ENCODE measurements at regions of chr2 and their contacts with region 1.

Region 1: GRCh38 chr2:134218930-134219658 is 34.8 kb upstream of the MGAT5 start:
- DNase-seq: peak; percentile 66
- H3K4me3 Mint-ChIP-seq: peak overlapping the region; percentile 33
- H3K27ac Mint-ChIP-seq: peak overlapping the region; percentile 91
- H3K4me1 Mint-ChIP-seq: peaks cover 60% of the 10 kb centered on the region
- H3K27me3 Mint-ChIP-seq: no peaks in the 10 kb centered on the region

Region 2: GRCh38 chr2:134169788-134170187 is 49.3 kb before region 1 on chr2:
- CTCF ChIA-PET with region 1: interaction called, 3 read pairs
- intact Hi-C with region 1: loop called (anchors 1 kb)
- DNase-seq: peak; percentile 45
- H3K4me3 Mint-ChIP-seq: no peak overlapping the region
- H3K27ac Mint-ChIP-seq: no peak overlapping the region
- H3K4me1 Mint-ChIP-seq: peaks cover 68% of the 10 kb centered on the region
- H3K27me3 Mint-ChIP-seq: no peaks in the 10 kb centered on the region

Region 3: GRCh38 chr2:134207564-134208209 is 11.4 kb before region 1 on chr2:
- CTCF ChIA-PET with region 1: interaction called, 11 read pairs
- intact Hi-C with region 1: no loop called
- DNase-seq: peak; percentile 81
- H3K4me3 Mint-ChIP-seq: no peak overlapping the region
- H3K27ac Mint-ChIP-seq: no peak overlapping the region
- H3K4me1 Mint-ChIP-seq: peaks cover 5% of the 10 kb centered on the region
- H3K27me3 Mint-ChIP-seq: no peaks in the 10 kb centered on the region

Region 4: DNA sequence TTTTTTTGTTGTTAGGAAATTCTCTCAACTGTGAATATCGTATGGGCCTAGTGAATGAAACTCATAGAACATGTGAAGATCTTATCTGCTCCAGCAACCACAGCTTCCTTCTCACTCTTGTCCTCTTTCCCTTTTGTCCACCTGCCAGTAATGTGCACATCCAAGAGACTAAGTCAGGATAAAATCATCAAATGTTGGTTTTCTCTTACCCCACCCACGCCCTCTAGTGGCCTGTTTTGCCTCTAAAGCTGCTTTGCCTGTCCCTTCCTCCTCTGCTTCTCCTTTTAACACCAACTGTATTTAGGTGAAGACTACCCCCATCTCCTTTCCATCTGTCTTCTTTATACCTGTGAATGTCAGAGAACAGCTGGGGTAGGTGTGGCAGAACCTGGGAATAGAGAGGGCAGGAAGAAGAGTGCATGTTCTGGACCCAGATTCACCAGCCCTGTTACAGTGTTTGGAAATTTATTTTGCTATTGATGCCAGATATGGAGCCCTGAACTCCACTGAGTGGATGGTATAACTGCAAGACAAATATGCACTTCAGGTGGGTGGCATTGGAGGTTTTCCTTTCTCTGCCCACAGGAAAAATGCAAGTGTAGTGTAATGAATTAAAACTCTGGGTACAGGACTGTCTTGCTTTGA is 26.4 kb after region 1 on chr2:
- CTCF ChIA-PET with region 1: interaction called, 13 read pairs
- intact Hi-C with region 1: no loop called
- DNase-seq: peak; percentile 90
- H3K4me3 Mint-ChIP-seq: no peak overlapping the region
- H3K27ac Mint-ChIP-seq: no peak overlapping the region
- H3K4me1 Mint-ChIP-seq: peaks cover 68% of the 10 kb centered on the region
- H3K27me3 Mint-ChIP-seq: no peaks in the 10 kb centered on the region

Region 5: DNA sequence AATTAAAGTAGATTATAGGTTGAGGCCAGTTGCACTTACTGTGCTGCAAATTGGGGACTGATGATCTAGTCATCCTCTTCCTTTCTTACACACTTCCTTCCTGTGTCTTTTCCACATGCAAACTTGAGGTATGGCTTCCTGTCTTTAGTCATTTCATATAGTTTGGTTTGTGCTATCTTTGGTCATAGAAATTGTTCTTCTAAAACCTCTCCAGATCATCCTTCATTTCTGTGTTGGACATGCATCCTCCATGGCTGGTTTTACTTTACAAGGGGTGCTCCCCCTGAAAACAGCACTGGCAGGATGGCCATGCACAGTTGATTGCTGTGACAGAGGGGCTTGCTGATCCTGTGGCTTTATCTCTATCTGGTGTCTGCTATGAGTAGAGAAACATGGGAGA is 71.3 kb after region 1 on chr2:
- CTCF ChIA-PET with region 1: no interaction called
- intact Hi-C with region 1: loop called (anchors 1 kb)
- DNase-seq: peak; percentile 30
- H3K4me3 Mint-ChIP-seq: no peak overlapping the region
- H3K27ac Mint-ChIP-seq: no peak overlapping the region
- H3K4me1 Mint-ChIP-seq: peaks cover 24% of the 10 kb centered on the region
- H3K27me3 Mint-ChIP-seq: no peaks in the 10 kb centered on the region

Region 6: GRCh38 chr2:134411828-134412638 is 192.9 kb after region 1 on chr2:
- CTCF ChIA-PET with region 1: interaction called, 5 read pairs
- intact Hi-C with region 1: loop called (anchors 1 kb)
- DNase-seq: peak; percentile 83
- H3K4me3 Mint-ChIP-seq: no peak overlapping the region
- H3K27ac Mint-ChIP-seq: no peak overlapping the region
- H3K4me1 Mint-ChIP-seq: peaks cover 18% of the 10 kb centered on the region
- H3K27me3 Mint-ChIP-seq: no peaks in the 10 kb centered on the region

Region 7: DNA sequence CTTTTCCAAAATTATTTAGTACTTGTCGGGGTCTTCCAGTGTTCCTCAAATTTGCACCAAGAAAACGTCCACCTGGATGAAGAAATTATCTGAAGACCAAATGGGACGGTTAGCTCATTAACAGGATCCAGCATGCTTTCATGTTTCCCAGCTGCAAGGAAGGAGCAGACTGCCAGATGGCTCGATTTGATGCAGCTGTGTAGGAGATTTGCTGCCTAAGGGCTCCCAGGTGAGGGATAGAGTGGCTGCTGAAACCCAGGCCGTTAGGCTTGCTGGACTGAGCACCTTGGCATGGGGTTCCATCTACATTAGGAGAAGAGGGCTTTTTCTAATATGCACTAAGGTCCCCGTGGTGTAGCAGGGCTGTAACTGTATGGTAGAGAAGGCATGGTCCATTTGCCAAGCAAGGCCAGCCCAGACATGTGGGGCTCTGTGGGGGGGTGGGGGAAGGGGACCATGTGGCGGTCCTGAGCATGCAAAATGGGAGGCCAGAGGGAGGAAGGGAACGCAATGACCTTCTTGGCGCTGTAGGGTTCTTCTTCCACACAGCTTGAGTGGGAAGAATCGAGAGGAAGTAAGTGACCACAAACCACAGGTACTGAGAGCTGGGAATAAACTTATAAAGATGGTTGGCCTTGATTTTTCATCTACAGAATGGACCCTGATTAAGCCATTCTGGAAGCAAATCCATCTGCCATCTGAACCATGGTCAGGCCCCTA is 355.7 kb after region 1 on chr2:
- CTCF ChIA-PET with region 1: no interaction called
- intact Hi-C with region 1: no loop called
- DNase-seq: no peak
- H3K4me3 Mint-ChIP-seq: no peak overlapping the region
- H3K27ac Mint-ChIP-seq: no peak overlapping the region
- H3K4me1 Mint-ChIP-seq: no peaks in the 10 kb centered on the region
- H3K27me3 Mint-ChIP-seq: no peaks in the 10 kb centered on the region

Region 8: DNA sequence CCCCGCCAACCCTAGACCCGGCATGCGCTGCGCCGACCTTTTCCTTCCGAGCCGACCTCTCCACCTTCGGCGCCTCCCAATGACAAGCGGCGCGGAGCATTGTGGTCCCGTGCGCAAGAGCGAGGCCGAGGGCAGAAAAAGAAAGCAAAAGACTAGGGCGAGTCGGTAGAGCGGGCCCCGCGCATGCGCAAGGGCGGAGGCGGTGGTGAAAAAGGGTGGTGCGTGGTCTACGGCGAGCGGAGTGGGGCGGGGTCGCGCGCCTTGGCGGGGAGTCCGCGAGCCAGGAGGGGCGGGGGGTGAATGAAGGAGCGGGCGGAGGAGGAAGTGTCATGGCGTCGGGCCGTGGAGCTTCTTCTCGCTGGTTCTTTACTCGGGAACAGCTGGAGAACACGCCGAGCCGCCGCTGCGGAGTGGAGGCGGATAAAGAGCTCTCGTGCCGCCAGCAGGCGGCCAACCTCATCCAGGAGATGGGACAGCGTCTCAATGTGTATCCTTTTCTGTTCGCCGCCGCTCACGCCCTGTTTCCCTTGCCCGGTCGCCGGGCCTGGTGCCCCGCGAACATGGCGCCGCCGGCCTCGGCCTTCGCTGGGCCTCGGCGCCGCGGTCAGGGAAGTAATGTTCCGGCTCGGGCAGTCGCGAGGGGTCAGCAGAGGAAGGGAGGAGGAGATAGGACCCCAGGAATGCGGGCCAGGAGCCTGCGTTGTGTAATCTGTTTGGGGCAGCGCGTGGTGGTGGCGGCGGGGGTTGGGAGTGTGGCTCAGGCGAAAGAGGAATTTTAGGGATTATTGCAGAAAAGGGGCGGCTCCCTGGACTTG is 699.6 kb after region 1 on chr2 and contains the start of gene CCNT2:
- CTCF ChIA-PET with region 1: no interaction called
- intact Hi-C with region 1: loop called (anchors 1 kb)
- DNase-seq: peak; percentile 99
- H3K4me3 Mint-ChIP-seq: peak within 1 kb of the TSS; percentile 95
- H3K27ac Mint-ChIP-seq: peak within 1 kb of the TSS; percentile 98
- H3K4me1 Mint-ChIP-seq: peaks cover 24% of the 10 kb centered on the region
- H3K27me3 Mint-ChIP-seq: no peaks in the 10 kb centered on the region
- total RNA-seq, gene CCNT2: 31.9 to 33.2 TPM